ENCODE measurements at regions of chr6 and their contacts with region 1.

Region 1: DNA sequence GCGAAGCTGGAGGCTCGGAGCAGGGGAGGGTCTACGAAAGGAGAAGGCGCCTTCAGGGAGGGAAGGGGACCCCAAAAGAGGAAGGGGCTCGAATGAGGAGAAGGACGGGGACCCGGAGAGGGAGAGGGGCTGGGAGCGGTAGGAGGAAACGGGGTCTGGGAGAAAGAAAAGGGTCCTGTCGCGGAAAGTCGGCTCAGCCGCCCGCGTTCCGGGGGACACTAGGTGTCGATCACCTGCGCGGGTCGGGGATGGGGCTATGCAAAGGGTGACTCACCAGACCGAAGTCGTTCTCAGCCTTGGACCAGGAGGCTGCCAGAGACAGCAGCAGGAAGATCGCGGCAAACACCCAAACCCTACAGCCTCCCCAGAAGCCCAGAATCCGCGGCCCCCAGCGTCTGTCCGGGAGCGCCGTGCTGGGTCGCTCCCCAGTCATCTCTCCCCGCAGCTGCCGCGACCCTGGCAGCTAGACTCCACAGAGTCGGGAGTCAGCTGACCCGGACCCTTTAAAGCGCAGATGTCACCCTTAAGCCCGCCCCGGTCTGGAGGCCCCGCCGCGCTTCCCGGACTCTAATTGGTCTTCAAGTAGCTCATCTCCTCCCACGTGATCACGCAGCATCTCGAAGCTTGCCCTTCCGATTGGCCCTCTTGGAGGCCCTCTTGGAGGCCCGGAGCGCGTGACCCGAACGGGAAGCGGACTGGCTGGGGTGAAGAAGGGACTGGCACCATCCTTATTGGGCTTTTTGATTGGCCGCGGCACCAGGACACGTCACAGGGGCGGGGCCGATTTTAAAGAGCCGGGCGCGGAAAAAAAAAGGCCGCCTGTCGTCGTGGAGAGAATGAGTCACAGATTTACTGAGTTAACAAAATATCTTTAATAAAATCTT is at the start of gene NEU1:
- DNase-seq: peak; percentile 100
- H3K4me3 ChIP-seq: peak within 1 kb of the TSS; percentile 54 to 99 (median 89)
- H3K27ac ChIP-seq: peak within 1 kb of the TSS; percentile 38 to 96 (median 87)
- H3K27me3 ChIP-seq: no peaks in the 10 kb centered on the region
- CTCF ChIP-seq: peak in 13 of 56 donors; percentile 8 to 44 (median 28)
- total RNA-seq, gene NEU1: 16.0 to 38.4 (median 27.6) TPM

Region 2: GRCh38 chr6:31546962-31547726 is 315.4 kb before region 1 on chr6 and contains the start of gene NFKBIL1:
- intact Hi-C with region 1: loop called in 1 of 2 experiments (anchors 2 kb)
- DNase-seq: peak; percentile 91 to 98 (median 98)
- H3K4me3 ChIP-seq: peak within 1 kb of the TSS; percentile 29 to 82 (median 68)
- H3K27ac ChIP-seq: peak within 1 kb of the TSS; percentile 51 to 96 (median 90)
- H3K27me3 ChIP-seq: no peaks in the 10 kb centered on the region
- CTCF ChIP-seq: peak in 27 of 56 donors; percentile 1 to 55 (median 10)
- total RNA-seq, gene NFKBIL1: 13.8 to 27.3 (median 20.1) TPM

Region 3: GRCh38 chr6:31652925-31653718 is 209.5 kb before region 1 on chr6:
- intact Hi-C with region 1: no loop called
- DNase-seq: peak; percentile 64 to 89 (median 86)
- H3K4me3 ChIP-seq: peak overlapping the region; percentile 62 to 100 (median 83)
- H3K27ac ChIP-seq: peak overlapping the region; percentile 84 to 100 (median 99)
- H3K27me3 ChIP-seq: no peaks in the 10 kb centered on the region
- CTCF ChIP-seq: peak in 20 of 56 donors; percentile 6 to 46 (median 23)

Region 4: DNA sequence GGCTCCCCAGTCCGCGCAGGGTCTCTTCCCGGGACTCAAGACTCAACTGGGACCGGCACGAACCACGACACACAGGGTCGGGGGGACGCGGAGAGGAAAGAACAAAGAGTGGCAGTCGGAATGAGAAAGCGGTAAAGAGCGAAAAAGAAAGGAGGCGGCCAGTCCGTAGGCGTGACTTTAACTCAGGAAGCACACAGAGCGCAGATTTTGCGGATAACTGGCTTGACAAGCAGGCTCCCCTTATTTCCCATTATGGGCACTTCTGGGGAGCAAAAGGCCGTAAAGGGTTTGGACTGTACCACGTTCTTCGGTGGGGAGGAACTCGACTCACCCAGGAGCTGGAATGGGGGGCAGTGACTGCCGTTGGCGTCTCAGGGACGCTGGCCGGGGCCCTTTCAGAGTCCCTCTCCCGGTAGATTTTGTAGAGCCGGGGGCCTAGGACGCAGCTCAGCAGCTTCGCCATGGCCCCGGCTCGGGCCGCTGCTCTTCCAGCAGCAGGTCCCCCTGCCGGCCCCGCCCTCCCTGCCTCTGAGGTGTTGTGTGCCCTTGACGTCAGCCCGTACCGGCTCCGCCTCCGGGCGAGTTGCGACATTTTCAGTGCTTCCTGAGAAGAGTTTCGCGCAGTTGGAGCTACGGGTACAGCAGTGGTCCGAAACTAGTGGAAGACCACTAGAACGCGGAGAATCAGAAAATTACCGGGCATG is 159.6 kb before region 1 on chr6 and contains the start of gene ABHD16A:
- intact Hi-C with region 1: loop called in 1 of 2 experiments (anchors 10 kb)
- DNase-seq: peak; percentile 98 to 99 (median 99)
- H3K4me3 ChIP-seq: peak within 1 kb of the TSS; percentile 69 to 98 (median 88)
- H3K27ac ChIP-seq: peak within 1 kb of the TSS; percentile 58 to 99 (median 97)
- H3K27me3 ChIP-seq: no peaks in the 10 kb centered on the region
- CTCF ChIP-seq: peak in 38 of 56 donors; percentile 7 to 49 (median 33)
- total RNA-seq, gene ABHD16A: 43.5 to 81.1 (median 56.8) TPM

Region 5: GRCh38 chr6:31795616-31796298 is 66.8 kb before region 1 on chr6 and contains the start of gene VARS1:
- intact Hi-C with region 1: loop called in 1 of 2 experiments (anchors 2 kb)
- DNase-seq: peak; percentile 71 to 92 (median 84)
- H3K4me3 ChIP-seq: peak within 1 kb of the TSS; percentile 66 to 98 (median 91)
- H3K27ac ChIP-seq: peak within 1 kb of the TSS; percentile 82 to 100 (median 95)
- H3K27me3 ChIP-seq: no peaks in the 10 kb centered on the region
- CTCF ChIP-seq: peak; percentile 56 to 98 (median 86)
- total RNA-seq, gene VARS1: 36.7 to 78.7 (median 56.4) TPM

Region 6: DNA sequence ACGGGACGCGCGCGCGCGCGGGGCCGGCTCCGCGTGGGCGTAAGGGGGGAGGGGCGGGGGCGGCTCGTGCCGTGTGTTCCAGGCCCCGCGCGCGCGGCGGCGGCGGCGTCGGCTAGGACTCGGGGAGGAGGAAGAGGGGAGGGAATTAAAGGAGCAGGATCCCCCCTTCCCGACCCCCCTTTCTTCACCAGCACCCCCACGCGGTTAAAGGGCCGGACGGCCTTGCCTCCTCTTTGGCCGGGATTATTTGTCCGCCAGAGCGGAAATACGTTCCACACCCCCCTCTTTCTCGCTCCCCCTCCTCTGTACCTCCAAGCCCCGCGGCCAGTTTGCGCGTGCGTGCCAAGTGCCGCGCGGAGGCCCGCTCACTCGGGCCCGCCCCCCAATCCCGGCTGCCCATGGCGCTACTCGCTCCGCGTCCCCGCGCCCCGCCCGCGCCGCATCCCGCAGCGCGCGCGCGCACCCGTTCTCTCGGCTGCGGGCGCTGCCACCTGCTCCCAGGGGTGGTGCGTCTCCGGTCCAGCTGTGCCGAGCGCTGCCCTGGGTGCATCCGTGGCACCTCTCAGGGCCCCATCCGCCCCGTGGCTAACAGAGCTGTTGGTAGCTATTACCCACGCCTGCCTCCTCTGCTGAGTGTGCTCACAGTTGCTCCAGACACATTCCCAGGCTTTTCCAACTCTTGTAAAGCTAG is 39.5 kb after region 1 on chr6 and contains the start of gene ZBTB12:
- intact Hi-C with region 1: loop called (anchors 2 kb)
- DNase-seq: peak; percentile 91 to 97 (median 94)
- H3K4me3 ChIP-seq: peak within 1 kb of the TSS; percentile 52 to 96 (median 72)
- H3K27ac ChIP-seq: peak within 1 kb of the TSS; percentile 70 to 99 (median 95)
- H3K27me3 ChIP-seq: no peaks in the 10 kb centered on the region
- CTCF ChIP-seq: peak in 13 of 56 donors; percentile 8 to 35 (median 17)
- total RNA-seq, gene ZBTB12: 3.7 to 13.7 (median 7.6) TPM